PC-3 (cell line): ENCODE measurements at regions of chr1 and their contacts with region 1.

Region 1: GRCh38 chr1:44049839-44050238 is 18.6 kb upstream of the SLC6A9 start:
- DNase-seq: peak; percentile 96
- ATAC-seq: peak; percentile 60
- H3K4me3 ChIP-seq: peak overlapping the region; percentile 51; the same call in 1 of the 2 replicates
- H3K27ac ChIP-seq: peak overlapping the region; percentile 98
- H3K4me1 ChIP-seq: peaks cover 39% of the 10 kb centered on the region
- H3K27me3 ChIP-seq: no peaks in the 10 kb centered on the region
- CTCF ChIP-seq: no peak

Region 2: GRCh38 chr1:44002606-44003157 is 47.2 kb before region 1 on chr1:
- CTCF ChIA-PET with region 1: interaction called, 6 read pairs
- POLR2A ChIA-PET with region 1: no interaction called
- intact Hi-C with region 1: loop called (anchors 1 kb)
- DNase-seq: no peak
- ATAC-seq: no peak
- H3K4me3 ChIP-seq: no peak overlapping the region
- H3K27ac ChIP-seq: no peak overlapping the region
- H3K4me1 ChIP-seq: peaks cover 3% of the 10 kb centered on the region; the same call in 1 of the 2 replicates
- H3K27me3 ChIP-seq: no peaks in the 10 kb centered on the region
- CTCF ChIP-seq: peak; percentile 35

Region 3: GRCh38 chr1:44067266-44068250 is 17.7 kb after region 1 on chr1:
- CTCF ChIA-PET with region 1: no interaction called
- POLR2A ChIA-PET with region 1: no interaction called
- intact Hi-C with region 1: no loop called
- DNase-seq: no peak
- ATAC-seq: no peak
- H3K4me3 ChIP-seq: no peak overlapping the region
- H3K27ac ChIP-seq: no peak overlapping the region
- H3K4me1 ChIP-seq: no peaks in the 10 kb centered on the region; the same call in 1 of the 2 replicates
- H3K27me3 ChIP-seq: no peaks in the 10 kb centered on the region
- CTCF ChIP-seq: no peak

Region 4: GRCh38 chr1:44154047-44154446 is 104.2 kb after region 1 on chr1:
- CTCF ChIA-PET with region 1: no interaction called
- POLR2A ChIA-PET with region 1: no interaction called
- intact Hi-C with region 1: loop called (anchors 2 kb)
- DNase-seq: peak; percentile 44
- ATAC-seq: peak; percentile 49
- H3K4me3 ChIP-seq: no peak overlapping the region
- H3K27ac ChIP-seq: peak overlapping the region; percentile 84
- H3K4me1 ChIP-seq: peaks cover 25% of the 10 kb centered on the region
- H3K27me3 ChIP-seq: no peaks in the 10 kb centered on the region
- CTCF ChIP-seq: no peak